Calu3 (cell line): ENCODE measurements at regions of chr5 and their contacts with region 1.

Region 1: DNA sequence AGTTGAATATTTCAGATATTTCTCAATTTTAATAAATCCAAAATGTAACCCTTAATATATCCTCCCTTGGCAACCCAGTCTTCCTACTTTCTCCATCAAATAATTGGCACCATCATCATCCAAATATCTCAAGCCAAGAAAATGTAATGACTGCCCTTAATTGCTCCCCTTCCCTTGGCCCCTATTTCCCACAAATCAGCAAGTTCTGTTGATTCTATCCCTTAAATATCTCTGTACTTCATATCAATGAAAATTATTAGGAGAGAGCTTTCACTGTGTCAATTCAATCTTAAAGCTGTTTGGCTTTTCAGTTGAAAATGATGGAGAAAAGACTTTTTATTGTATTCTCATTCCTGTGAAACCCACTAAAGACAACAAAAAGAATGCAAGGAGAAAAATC is 349.8 kb downstream of the HINT1 start:
- DNase-seq: no peak
- H3K4me3 Mint-ChIP-seq: no peak overlapping the region
- H3K27ac Mint-ChIP-seq: no peak overlapping the region
- H3K4me1 Mint-ChIP-seq: no peaks in the 10 kb centered on the region
- H3K27me3 Mint-ChIP-seq: no peaks in the 10 kb centered on the region
- CTCF ChIP-seq: no peak

Region 2: GRCh38 chr5:130651440-130651839 is 163.8 kb before region 1 on chr5:
- CTCF ChIA-PET with region 1: interaction called, 11 read pairs
- intact Hi-C with region 1: no loop called
- DNase-seq: no peak
- H3K4me3 Mint-ChIP-seq: no peak overlapping the region
- H3K27ac Mint-ChIP-seq: no peak overlapping the region
- H3K4me1 Mint-ChIP-seq: no peaks in the 10 kb centered on the region
- H3K27me3 Mint-ChIP-seq: no peaks in the 10 kb centered on the region
- CTCF ChIP-seq: no peak

Region 3: GRCh38 chr5:130836729-130837660 is 21.7 kb after region 1 on chr5:
- CTCF ChIA-PET with region 1: no interaction called
- intact Hi-C with region 1: loop called (anchors 1 kb)
- DNase-seq: no peak
- H3K4me3 Mint-ChIP-seq: peak overlapping the region; percentile 82
- H3K27ac Mint-ChIP-seq: peak overlapping the region; percentile 80
- H3K4me1 Mint-ChIP-seq: peaks cover 10% of the 10 kb centered on the region
- H3K27me3 Mint-ChIP-seq: no peaks in the 10 kb centered on the region
- CTCF ChIP-seq: no peak